Naive thymus-derived CD8-positive, alpha-beta T cell (primary cell): ENCODE measurements at regions of chr1 and their contacts with region 1.

Region 1: GRCh38 chr1:148372731-148373130 is 110.4 kb downstream of the PPIAL4G start:
- DNase-seq: peak in 9 of 10 donors; percentile 30 to 77 (median 55)
- ATAC-seq: peak; percentile 62 to 79
- H3K4me3 Mint-ChIP-seq: peak overlapping the region; percentile 57 to 89 (median 82)
- H3K27ac Mint-ChIP-seq: peak overlapping the region; percentile 87 to 99 (median 96)
- H3K4me1 Mint-ChIP-seq: peaks cover 26 to 65% (median 50%) of the 10 kb centered on the region in 4 donors
- H3K27me3 Mint-ChIP-seq: no peaks in the 10 kb centered on the region

Region 2: DNA sequence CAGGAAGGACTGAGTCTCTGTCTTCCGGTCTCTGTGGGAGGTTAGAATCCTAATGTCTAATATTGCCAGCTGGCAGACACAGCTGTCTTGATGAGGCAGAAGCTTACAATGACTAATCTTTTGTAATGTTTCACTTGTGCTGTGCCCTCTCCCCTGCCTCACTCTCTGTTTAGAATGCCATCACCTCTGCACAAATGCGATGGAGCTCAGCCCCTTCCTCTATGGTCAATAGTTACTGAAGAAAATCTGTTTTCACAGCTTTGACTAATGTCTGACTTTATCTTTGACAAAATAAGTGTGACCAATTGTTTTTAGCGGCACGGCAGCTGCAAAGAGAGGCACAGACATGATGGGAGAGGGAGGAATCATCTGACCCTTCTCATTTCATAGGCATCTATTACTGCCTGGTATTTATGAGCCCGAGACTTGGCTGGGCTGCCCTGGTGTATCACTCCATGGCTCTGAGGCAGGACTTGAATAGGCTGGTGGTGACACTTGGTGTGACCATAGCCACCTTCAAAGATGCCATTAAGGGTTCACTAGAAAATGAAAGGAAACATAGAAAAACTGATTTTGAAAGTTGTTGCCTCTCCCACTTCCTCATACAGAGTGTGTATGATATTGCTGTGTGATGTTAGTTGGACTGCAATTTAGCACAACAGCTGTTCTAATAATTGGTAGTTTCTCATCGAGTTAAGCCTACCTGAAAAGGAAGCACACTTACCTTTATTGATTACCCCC is 57.5 kb before region 1 on chr1:
- POLR2A ChIA-PET with region 1: no interaction called
- DNase-seq: no peak
- ATAC-seq: no peak
- H3K4me3 Mint-ChIP-seq: no peak overlapping the region
- H3K27ac Mint-ChIP-seq: no peak overlapping the region
- H3K4me1 Mint-ChIP-seq: peaks cover 12 to 47% (median 36%) of the 10 kb centered on the region in 4 donors
- H3K27me3 Mint-ChIP-seq: peaks cover 8 to 30% (median 9%) of the 10 kb centered on the region in 5 donors

Region 3: GRCh38 chr1:148357037-148357436 is 15.7 kb before region 1 on chr1:
- POLR2A ChIA-PET with region 1: no interaction called
- DNase-seq: no peak
- ATAC-seq: no peak
- H3K4me3 Mint-ChIP-seq: no peak overlapping the region
- H3K27ac Mint-ChIP-seq: no peak overlapping the region
- H3K4me1 Mint-ChIP-seq: peaks cover 10 to 33% (median 21%) of the 10 kb centered on the region in 4 donors
- H3K27me3 Mint-ChIP-seq: peaks cover 0 to 45% (median 17%) of the 10 kb centered on the region in 5 donors

Region 4: GRCh38 chr1:148388260-148389027 is 15.7 kb after region 1 on chr1:
- POLR2A ChIA-PET with region 1: interaction called, 141 read pairs
- DNase-seq: peak; percentile 65 to 94 (median 84)
- ATAC-seq: peak; percentile 92
- H3K4me3 Mint-ChIP-seq: peak overlapping the region; percentile 94 to 98 (median 95)
- H3K27ac Mint-ChIP-seq: peak overlapping the region; percentile 98 to 100 (median 100)
- H3K4me1 Mint-ChIP-seq: peaks cover 33 to 51% (median 48%) of the 10 kb centered on the region in 4 donors
- H3K27me3 Mint-ChIP-seq: no peaks in the 10 kb centered on the region

Region 5: DNA sequence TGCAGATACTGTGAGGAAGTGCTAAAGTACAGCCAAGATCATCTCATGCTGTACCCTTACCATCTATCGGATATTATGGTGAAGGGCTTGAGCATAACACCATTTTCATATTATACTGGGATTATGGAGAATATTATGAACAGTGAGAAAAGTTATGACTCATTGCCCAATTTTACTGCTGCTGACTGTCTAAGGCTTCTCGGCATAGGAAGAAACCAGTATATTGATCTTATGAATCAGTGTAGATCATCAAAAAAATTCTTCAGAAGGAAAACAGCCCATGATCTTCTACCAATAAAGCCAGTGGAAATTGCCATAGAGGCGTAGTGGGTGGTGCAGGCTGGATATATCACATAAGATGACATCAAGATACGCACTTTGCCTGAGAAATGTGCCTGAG is 62.7 kb after region 1 on chr1:
- POLR2A ChIA-PET with region 1: interaction called, 10 read pairs
- DNase-seq: no peak
- ATAC-seq: no peak
- H3K4me3 Mint-ChIP-seq: no peak overlapping the region
- H3K27ac Mint-ChIP-seq: peak overlapping the region; percentile 33 to 85 (median 72)
- H3K4me1 Mint-ChIP-seq: peaks cover 28 to 79% (median 75%) of the 10 kb centered on the region in 4 donors
- H3K27me3 Mint-ChIP-seq: no peaks in the 10 kb centered on the region